CD14-positive monocyte (primary cell): ENCODE measurements at regions of chr12 and their contacts with region 1.

Region 1: GRCh38 chr12:1859643-1860042 is 39.3 kb downstream of the LRTM2 start:
- DNase-seq: no peak
- H3K4me3 ChIP-seq: no peak overlapping the region
- H3K4me3 Mint-ChIP-seq: no peak overlapping the region
- H3K27ac ChIP-seq: no peak overlapping the region
- H3K27ac Mint-ChIP-seq: no peak overlapping the region
- H3K4me1 ChIP-seq: no peaks in the 10 kb centered on the region
- H3K4me1 Mint-ChIP-seq: peaks cover 2% of the 10 kb centered on the region
- H3K27me3 ChIP-seq: peaks cover 0 to 13% of the 10 kb centered on the region in 2 donors
- H3K27me3 Mint-ChIP-seq: peaks cover 9 to 22% (median 14%) of the 10 kb centered on the region in 3 donors
- CTCF ChIP-seq: no peak

Region 2: DNA sequence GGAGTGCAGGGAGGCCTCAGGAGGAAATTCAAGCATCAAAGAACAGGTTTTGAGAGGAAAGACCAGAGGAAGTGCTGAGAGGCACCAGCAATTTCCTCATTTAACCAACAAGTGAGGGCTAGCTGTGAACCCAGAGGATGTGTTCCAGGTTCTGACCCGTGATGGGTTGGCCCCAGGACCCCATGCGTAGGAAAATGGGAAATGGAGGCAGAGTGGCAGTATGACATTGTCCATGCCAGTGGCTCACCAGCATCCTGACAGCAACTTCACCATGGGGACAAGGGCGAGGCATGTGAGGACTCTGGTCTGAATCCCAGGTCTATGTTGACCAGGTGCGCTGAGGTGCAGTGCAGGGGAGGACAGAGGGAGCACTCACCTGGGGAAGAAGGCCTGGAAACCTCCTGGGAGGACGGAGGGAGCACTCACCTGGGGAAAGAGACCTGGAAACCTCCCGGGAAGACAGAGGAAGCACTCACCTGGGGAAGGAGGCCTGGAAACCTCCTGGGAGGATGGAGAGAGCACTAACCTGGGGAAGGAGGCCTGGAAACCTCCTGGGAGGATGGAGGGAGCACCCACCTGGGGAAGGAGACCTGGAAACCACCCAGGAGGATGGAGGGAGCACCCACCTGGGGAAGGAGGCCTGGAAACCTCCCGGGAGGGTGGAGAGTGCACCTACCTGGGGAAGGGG is 65.5 kb after region 1 on chr12:
- intact Hi-C with region 1: loop called in 1 of 2 experiments (anchors 2 kb)
- DNase-seq: peak in 1 of 3 donors; percentile 13
- H3K4me3 ChIP-seq: no peak overlapping the region
- H3K4me3 Mint-ChIP-seq: peak overlapping the region in 1 of 2 donors; percentile 0
- H3K27ac ChIP-seq: no peak overlapping the region
- H3K27ac Mint-ChIP-seq: peak overlapping the region in 1 of 7 donors; percentile 56
- H3K4me1 ChIP-seq: peaks cover 34 to 42% of the 10 kb centered on the region in 2 donors
- H3K4me1 Mint-ChIP-seq: peaks cover 39% of the 10 kb centered on the region
- H3K27me3 ChIP-seq: no peaks in the 10 kb centered on the region
- H3K27me3 Mint-ChIP-seq: peaks cover 4 to 15% (median 6%) of the 10 kb centered on the region in 3 donors
- CTCF ChIP-seq: no peak